CD8-positive, alpha-beta T cell (primary cell): ENCODE measurements at regions of chr12 and their contacts with region 1.

Region 1: GRCh38 chr12:31325877-31326631 is at the start of gene SINHCAF:
- DNase-seq: peak; percentile 94 to 99 (median 99)
- ATAC-seq: peak; percentile 55
- H3K4me3 ChIP-seq: peak within 1 kb of the TSS; percentile 81 to 97
- H3K4me3 Mint-ChIP-seq: peak within 1 kb of the TSS; percentile 92
- H3K27ac ChIP-seq: peak within 1 kb of the TSS; percentile 92 to 96
- H3K27ac Mint-ChIP-seq: peak within 1 kb of the TSS; percentile 93
- H3K4me1 ChIP-seq: peaks cover 22% of the 10 kb centered on the region
- H3K4me1 Mint-ChIP-seq: peaks cover 31% of the 10 kb centered on the region
- H3K27me3 ChIP-seq: no peaks in the 10 kb centered on the region
- H3K27me3 Mint-ChIP-seq: no peaks in the 10 kb centered on the region
- CTCF ChIP-seq: no peak
- total RNA-seq, gene SINHCAF: 93.7 to 108 TPM

Region 2: DNA sequence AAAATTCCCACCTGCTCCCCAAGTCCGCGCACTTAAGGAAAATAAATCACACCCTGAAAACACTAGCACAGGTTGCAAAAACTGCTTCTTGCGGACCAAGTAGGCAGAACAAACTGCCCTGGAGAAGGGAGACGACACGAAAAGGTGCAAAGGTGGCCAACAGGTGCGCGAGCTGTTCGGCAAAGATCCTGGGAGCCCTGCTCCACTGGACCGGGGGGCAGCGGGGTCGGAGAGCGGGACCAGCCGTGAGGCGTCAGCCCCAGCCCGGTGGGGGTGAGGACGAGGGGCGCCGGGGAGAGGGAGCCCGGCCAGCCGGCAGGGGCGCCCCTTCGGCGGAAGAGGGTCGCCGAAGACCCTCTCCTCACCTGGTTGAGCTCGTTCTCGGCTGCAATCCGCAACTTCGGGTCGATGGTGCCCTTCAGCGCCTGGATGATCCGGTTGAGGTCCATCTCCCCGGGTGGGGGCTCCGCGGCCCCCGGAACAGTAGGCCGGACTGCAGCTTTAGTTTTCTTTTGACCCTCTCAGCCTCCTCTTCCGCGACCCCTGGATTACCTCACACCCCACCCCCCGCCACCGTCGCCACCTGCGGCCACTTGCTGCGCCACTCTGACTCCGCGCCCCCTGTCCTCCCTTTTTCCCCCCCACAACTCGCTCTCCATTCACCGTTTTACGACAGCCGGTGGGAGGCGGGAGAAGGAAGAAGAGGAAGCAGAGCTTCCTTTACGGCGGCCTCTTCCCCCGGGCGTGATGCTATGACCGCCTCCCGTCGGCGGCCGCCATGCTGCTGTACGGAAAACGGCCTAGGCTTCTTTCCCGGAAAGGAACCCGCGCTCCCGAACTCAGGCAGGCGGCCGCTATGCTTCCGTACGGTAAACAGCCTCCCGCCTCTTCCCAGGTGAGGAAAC is 630.6 kb before region 1 on chr12 and contains the start of gene IPO8:
- CTCF ChIA-PET with region 1: no interaction called
- POLR2A ChIA-PET with region 1: no interaction called
- intact Hi-C with region 1: loop called (anchors 1 to 10 kb)
- DNase-seq: peak; percentile 65 to 93 (median 85)
- ATAC-seq: peak; percentile 93
- H3K4me3 ChIP-seq: peak within 1 kb of the TSS; percentile 63 to 96
- H3K4me3 Mint-ChIP-seq: peak within 1 kb of the TSS; percentile 98
- H3K27ac ChIP-seq: peak within 1 kb of the TSS; percentile 50 to 59
- H3K27ac Mint-ChIP-seq: peak within 1 kb of the TSS; percentile 93
- H3K4me1 ChIP-seq: peaks cover 35% of the 10 kb centered on the region
- H3K4me1 Mint-ChIP-seq: peaks cover 51% of the 10 kb centered on the region
- H3K27me3 ChIP-seq: no peaks in the 10 kb centered on the region
- H3K27me3 Mint-ChIP-seq: no peaks in the 10 kb centered on the region
- CTCF ChIP-seq: no peak
- total RNA-seq, gene IPO8: 21.0 to 22.7 TPM

Region 3: GRCh38 chr12:31274520-31275300 is 51.3 kb before region 1 on chr12:
- CTCF ChIA-PET with region 1: interaction called, 7 read pairs
- POLR2A ChIA-PET with region 1: interaction called, 5 read pairs
- intact Hi-C with region 1: loop called in 1 of 2 experiments (anchors 5 kb)
- DNase-seq: no peak
- ATAC-seq: no peak
- H3K4me3 ChIP-seq: no peak overlapping the region
- H3K4me3 Mint-ChIP-seq: no peak overlapping the region
- H3K27ac ChIP-seq: no peak overlapping the region
- H3K27ac Mint-ChIP-seq: peak overlapping the region; percentile 20
- H3K4me1 ChIP-seq: no peaks in the 10 kb centered on the region
- H3K4me1 Mint-ChIP-seq: peaks cover 3% of the 10 kb centered on the region
- H3K27me3 ChIP-seq: no peaks in the 10 kb centered on the region
- H3K27me3 Mint-ChIP-seq: no peaks in the 10 kb centered on the region
- CTCF ChIP-seq: no peak

Region 4: DNA sequence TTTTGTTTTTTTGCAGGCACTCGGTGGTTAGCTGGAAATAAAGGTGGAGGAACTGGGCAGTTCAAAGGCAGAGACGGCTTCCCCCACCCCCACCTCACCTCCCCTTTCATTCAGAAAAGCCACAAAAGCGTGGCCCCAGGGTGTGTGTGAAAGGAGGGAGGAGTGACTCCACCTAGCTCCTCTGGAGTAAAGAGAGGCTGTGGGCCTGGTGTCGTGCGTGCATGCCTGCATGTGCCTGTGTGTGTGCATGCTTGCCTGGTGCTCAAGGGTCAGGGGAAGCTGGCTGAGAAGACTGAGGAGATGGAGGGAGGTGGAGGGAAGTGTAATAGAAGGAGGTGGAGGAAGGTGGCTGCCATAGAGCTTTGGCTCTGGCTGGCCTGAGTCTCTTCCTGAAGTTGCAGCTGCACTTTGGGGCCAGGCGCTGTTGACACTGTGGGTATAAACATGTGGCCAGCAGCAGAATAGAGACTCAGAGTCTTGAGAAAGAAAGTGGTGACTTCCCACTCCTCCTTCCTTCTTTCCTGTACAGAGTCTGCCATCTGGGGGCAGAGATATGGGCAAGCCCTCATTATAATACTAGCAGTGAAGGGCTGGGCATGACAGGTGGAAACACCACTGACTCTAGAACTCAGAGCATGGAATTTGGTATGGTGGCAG is 36.8 kb after region 1 on chr12:
- CTCF ChIA-PET with region 1: no interaction called
- POLR2A ChIA-PET with region 1: no interaction called
- intact Hi-C with region 1: loop called in 1 of 2 experiments (anchors 1 kb)
- DNase-seq: peak in 3 of 9 experiments; percentile 4 to 56 (median 35)
- ATAC-seq: peak; percentile 49
- H3K4me3 ChIP-seq: peak overlapping the region in 1 of 2 experiments; percentile 7
- H3K4me3 Mint-ChIP-seq: peak overlapping the region; percentile 52
- H3K27ac ChIP-seq: peak overlapping the region in 1 of 2 experiments; percentile 25
- H3K27ac Mint-ChIP-seq: peak overlapping the region; percentile 47
- H3K4me1 ChIP-seq: peaks cover 10% of the 10 kb centered on the region
- H3K4me1 Mint-ChIP-seq: peaks cover 17% of the 10 kb centered on the region
- H3K27me3 ChIP-seq: no peaks in the 10 kb centered on the region
- H3K27me3 Mint-ChIP-seq: no peaks in the 10 kb centered on the region
- CTCF ChIP-seq: no peak

Region 5: GRCh38 chr12:32273712-32274111 is 947.7 kb after region 1 on chr12:
- CTCF ChIA-PET with region 1: no interaction called
- POLR2A ChIA-PET with region 1: no interaction called
- intact Hi-C with region 1: loop called in 1 of 2 experiments (anchors 5 kb)
- DNase-seq: peak; percentile 13 to 79 (median 59)
- ATAC-seq: peak; percentile 98
- H3K4me3 ChIP-seq: no peak overlapping the region
- H3K4me3 Mint-ChIP-seq: peak overlapping the region; percentile 72
- H3K27ac ChIP-seq: peak overlapping the region; percentile 36 to 75
- H3K27ac Mint-ChIP-seq: peak overlapping the region; percentile 99
- H3K4me1 ChIP-seq: peaks cover 20% of the 10 kb centered on the region
- H3K4me1 Mint-ChIP-seq: peaks cover 20% of the 10 kb centered on the region
- H3K27me3 ChIP-seq: no peaks in the 10 kb centered on the region
- H3K27me3 Mint-ChIP-seq: no peaks in the 10 kb centered on the region
- CTCF ChIP-seq: no peak

Region 6: GRCh38 chr12:32939801-32940200 is 1613.7 kb after region 1 on chr12:
- CTCF ChIA-PET with region 1: no interaction called
- POLR2A ChIA-PET with region 1: no interaction called
- intact Hi-C with region 1: no loop called
- DNase-seq: no peak
- ATAC-seq: no peak
- H3K4me3 ChIP-seq: no peak overlapping the region
- H3K4me3 Mint-ChIP-seq: no peak overlapping the region
- H3K27ac ChIP-seq: no peak overlapping the region
- H3K27ac Mint-ChIP-seq: no peak overlapping the region
- H3K4me1 ChIP-seq: no peaks in the 10 kb centered on the region
- H3K4me1 Mint-ChIP-seq: no peaks in the 10 kb centered on the region
- H3K27me3 ChIP-seq: no peaks in the 10 kb centered on the region
- H3K27me3 Mint-ChIP-seq: no peaks in the 10 kb centered on the region
- CTCF ChIP-seq: no peak